Heart right ventricle (tissue), 16 donors: ENCODE measurements at regions of chr2 and their contacts with region 1.

Region 1: GRCh38 chr2:45797451-45798230 is 146.2 kb downstream of the PRKCE start:
- DNase-seq: no peak
- ATAC-seq: no peak
- H3K4me3 ChIP-seq: no peak overlapping the region
- H3K27ac ChIP-seq: no peak overlapping the region
- H3K4me1 ChIP-seq: peaks cover 0 to 24% (median 16%) of the 10 kb centered on the region in 9 donors
- H3K27me3 ChIP-seq: no peaks in the 10 kb centered on the region
- CTCF ChIP-seq: no peak

Region 2: DNA sequence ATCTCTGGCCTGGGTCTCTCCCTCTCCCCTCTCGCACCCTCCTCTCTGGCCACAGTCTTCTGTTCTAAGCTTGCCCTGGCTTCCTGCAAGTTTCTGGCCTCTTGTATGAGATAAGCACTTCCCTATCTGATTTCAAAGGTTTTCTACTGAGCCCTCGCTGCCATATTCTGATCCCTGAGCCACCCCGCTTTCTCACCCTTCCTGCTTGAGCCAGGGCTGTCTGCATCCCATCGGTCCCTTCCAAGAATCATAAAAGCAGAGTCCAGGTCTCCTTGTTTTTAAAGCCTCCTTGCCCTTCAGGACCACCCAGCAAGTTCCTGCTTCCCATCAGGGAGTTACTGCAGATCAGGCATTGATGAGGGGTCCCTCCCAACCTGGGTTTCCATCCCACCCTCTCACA is 36.0 kb before region 1 on chr2:
- intact Hi-C with region 1: loop called in 1 of 10 experiments (anchors 2 kb)
- DNase-seq: no peak
- ATAC-seq: no peak
- H3K4me3 ChIP-seq: no peak overlapping the region
- H3K27ac ChIP-seq: no peak overlapping the region
- H3K4me1 ChIP-seq: peaks cover 10 to 44% (median 28%) of the 10 kb centered on the region in 9 donors
- H3K27me3 ChIP-seq: no peaks in the 10 kb centered on the region
- CTCF ChIP-seq: no peak

Region 3: DNA sequence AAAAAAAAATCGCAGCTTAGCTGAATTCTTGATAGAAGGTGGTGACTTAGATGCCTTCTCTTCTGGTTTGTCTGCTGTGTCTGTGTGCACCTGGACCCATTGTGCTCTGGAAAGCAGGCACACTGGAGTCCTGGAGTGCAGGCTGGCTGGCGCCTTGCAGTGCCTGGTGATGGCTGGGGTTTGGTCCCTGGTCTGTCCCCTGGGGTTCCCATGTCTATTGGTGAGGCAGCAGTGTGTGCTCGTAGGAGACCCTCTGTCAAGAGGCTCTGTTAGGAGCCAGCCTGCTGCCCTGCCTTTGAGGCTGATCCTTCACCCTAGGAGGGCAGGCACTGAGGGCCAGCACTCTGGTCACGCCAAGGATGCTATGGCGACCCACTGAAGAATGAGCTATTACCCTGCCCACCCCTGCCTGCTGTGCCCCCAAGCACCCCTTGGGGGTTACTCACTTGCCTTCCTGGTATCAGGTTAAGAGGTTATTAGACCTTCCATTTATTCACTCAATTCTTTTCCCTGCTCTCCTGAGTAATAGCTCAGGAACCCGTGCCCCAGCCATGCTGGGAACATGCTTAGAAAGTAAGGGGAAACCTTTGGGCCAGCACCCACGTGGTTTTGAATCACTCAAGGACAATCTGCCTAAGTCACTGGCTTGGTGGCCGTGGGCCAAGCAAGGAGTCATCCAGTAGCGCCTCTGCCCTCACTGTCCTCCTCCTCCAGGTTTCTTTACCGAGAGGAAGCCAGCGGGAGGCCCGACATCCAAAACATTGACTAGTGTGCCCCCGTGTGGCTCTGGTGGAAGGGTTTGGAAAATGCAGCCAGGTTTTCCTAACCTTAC is 138.4 kb after region 1 on chr2:
- intact Hi-C with region 1: no loop called
- DNase-seq: peak; percentile 89 to 90
- ATAC-seq: peak; percentile 84 to 96 (median 88)
- H3K4me3 ChIP-seq: peak overlapping the region in 1 of 10 donors; percentile 15
- H3K27ac ChIP-seq: peak overlapping the region in 7 of 10 donors; percentile 2 to 48 (median 42)
- H3K4me1 ChIP-seq: peaks cover 0 to 34% (median 22%) of the 10 kb centered on the region in 9 donors
- H3K27me3 ChIP-seq: no peaks in the 10 kb centered on the region
- CTCF ChIP-seq: peak; percentile 60 to 89 (median 80)

Region 4: GRCh38 chr2:45974056-45974455 is 176.4 kb after region 1 on chr2:
- intact Hi-C with region 1: no loop called
- DNase-seq: no peak
- ATAC-seq: no peak
- H3K4me3 ChIP-seq: no peak overlapping the region
- H3K27ac ChIP-seq: no peak overlapping the region
- H3K4me1 ChIP-seq: no peaks in the 10 kb centered on the region
- H3K27me3 ChIP-seq: no peaks in the 10 kb centered on the region
- CTCF ChIP-seq: no peak